ENCODE measurements at regions of chr2 and their contacts with region 1.

Region 1: GRCh38 chr2:54704688-54705605 is 18.5 kb upstream of the EML6 start:
- DNase-seq: peak; percentile 46
- CTCF ChIP-seq: peak; percentile 54

Region 2: DNA sequence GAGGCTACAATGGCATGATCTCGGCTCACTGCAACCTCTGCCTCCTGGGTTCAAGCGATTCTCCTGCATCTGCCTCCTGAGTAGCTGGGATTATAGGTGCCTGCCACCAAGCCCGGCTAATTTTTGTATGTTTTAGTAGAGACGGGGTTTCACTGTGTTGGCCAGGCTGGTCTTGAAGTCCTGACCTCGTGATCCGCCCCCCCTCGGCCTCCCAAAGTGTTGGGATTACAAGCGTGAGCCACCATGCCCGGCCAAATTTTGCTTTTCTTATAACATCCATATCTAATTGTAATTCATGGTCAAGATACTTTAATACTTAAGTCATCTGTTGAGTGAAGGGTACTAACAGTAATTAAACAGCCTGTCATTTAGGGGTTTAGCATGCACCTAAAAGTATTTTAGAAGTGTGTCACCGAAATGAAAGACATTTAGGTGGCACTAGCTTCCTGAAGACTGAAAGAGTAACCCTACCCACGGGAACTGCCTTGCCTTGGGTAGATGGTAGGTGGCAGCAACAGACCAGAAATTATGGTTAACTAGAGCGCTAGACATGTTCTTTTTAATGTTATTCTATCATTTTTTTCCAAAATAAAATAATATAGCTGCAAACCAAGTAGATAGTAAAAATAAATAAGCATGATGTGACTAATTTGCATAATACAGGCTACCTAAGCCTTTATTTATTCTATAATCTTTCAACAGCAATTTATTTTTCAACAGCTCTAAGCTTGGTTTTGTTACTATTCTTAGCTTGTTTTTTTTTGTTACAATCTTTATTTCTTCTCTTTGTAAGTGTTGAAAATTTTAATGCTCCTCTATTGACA is 598.1 kb before region 1 on chr2:
- CTCF ChIA-PET with region 1: interaction called, 23 read pairs
- POLR2A ChIA-PET with region 1: no interaction called
- DNase-seq: peak; percentile 42
- CTCF ChIP-seq: peak; percentile 66

Region 3: DNA sequence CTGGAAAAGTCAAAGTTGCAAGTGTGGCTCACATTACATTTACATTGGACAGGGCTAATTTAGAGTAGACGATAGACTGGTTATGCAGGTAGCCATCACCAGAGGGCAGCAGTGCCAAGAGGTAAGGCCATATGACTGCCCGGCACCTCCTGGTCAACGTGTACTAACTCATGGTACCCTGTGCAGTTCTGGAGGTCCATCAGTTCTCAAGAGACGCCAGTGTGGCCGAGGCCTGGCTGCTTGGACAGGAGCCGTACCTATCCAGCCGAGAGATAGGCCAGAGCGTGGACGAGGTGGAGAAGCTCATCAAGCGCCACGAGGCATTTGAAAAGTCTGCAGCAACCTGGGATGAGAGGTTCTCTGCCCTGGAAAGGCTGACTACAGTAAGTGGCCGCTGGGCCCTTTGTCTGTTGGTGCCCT is 47.3 kb before region 1 on chr2:
- CTCF ChIA-PET with region 1: interaction called, 105 read pairs
- POLR2A ChIA-PET with region 1: no interaction called
- DNase-seq: peak; percentile 48
- CTCF ChIP-seq: peak; percentile 45

Region 4: GRCh38 chr2:54665436-54665856 is 39.5 kb before region 1 on chr2:
- CTCF ChIA-PET with region 1: interaction called, 105 read pairs
- POLR2A ChIA-PET with region 1: no interaction called
- DNase-seq: peak; percentile 38
- CTCF ChIP-seq: peak; percentile 54

Region 5: DNA sequence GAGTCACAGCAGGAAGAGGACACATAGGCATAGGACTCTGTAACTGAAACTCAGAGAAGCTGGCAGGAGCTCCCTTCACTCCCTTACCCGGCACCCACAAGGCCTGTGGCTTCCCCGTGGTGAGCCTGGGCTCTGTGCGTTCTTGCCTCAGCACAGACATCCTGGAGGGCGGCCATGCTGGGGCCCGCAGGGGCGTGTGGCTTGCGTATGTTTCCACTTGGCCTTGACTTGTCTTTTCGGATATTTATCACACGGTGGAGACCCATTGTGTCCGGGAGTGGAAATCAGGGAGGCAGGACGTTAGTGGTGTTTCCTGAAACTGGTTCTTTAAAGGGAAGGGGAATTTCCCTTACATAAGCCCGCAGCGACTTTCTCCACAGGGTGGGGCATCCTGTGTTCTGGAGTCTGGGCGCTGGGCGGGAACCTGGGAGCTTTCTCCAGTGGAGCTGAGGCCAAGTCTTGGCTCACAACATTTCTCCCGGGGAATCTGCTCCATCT is 31.4 kb before region 1 on chr2:
- CTCF ChIA-PET with region 1: interaction called, 105 read pairs
- POLR2A ChIA-PET with region 1: no interaction called
- DNase-seq: peak; percentile 38
- CTCF ChIP-seq: no peak

Region 6: GRCh38 chr2:54683596-54683995 is 21.4 kb before region 1 on chr2:
- CTCF ChIA-PET with region 1: interaction called, 61 read pairs
- POLR2A ChIA-PET with region 1: no interaction called
- DNase-seq: no peak
- CTCF ChIP-seq: no peak

Region 7: DNA sequence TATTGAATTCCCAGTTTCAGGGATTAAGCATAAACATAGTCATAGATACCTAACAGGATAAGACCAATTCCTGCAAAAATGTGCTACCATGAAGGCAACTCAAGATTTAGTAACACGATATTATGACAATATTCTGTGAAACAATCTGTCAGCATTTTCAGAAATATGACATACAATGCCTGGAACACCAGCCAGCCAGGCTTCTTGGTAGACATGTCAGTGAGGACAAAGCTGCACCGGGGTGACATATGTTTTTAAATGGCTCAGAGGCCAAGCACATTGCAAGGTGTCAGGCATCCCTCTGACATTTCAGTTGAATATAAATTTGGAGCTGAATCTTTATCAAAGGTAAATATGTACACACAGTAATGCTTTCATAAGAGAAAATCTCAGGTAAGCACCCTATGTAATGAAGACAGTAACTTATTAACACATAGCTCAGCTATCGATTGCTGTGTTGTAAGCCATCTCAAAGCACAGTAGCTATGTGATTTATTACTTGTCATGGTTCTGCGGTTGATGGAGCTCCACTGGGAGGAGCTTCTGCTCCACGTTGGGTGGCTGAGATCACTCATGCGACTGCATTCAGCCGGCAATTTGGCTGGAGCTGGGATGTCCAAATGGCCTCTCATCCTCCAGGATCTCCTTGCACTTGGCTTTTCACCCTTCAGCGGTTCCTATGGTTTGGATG is 13.4 kb before region 1 on chr2:
- CTCF ChIA-PET with region 1: interaction called, 59 read pairs
- POLR2A ChIA-PET with region 1: interaction called, 3 read pairs
- DNase-seq: no peak
- CTCF ChIP-seq: no peak